CD8-positive, alpha-beta memory T cell (primary cell): ENCODE measurements at regions of chr19 and their contacts with region 1.

Region 1: DNA sequence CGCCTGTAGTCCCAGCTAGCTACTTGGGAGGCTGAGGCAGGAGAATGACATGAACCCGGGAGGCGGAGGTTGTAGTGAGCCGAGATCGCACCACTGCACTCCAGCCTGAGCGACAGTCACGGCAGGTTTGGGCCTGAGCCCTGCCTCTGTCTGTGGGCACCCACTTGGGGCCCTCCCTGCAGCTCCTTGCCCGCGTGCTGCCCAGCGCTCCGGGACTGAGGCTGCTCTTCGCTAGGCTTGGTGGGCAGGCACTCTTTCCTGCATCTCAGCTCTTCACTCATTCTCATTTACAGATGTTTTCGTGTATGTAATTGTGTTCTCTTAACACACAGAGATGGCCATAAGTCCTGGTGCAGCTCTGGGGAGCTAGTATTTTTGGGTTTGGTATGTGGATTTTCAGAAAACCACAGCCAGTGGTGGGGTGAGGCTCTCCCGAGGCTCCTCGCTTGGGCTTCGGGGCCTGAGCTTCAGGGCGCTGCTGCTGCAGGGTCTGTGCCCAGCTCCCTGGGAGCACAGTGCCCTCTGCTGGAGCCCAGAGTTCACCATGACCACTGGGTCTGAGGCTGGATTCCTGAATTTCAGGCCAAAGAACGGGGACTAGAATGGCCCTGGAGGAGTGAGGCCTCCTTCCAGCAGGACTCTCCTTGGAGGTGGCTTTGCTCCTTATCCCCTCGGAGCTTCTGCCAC is 15.2 kb downstream of the UPF1 start:
- DNase-seq: peak; percentile 47 to 75 (median 51)
- H3K4me3 ChIP-seq: no peak overlapping the region
- H3K4me3 Mint-ChIP-seq: peak overlapping the region in 4 of 7 donors; percentile 37 to 66 (median 52)
- H3K27ac ChIP-seq: no peak overlapping the region
- H3K27ac Mint-ChIP-seq: peak overlapping the region in 6 of 8 donors; percentile 7 to 91 (median 49)
- H3K4me1 ChIP-seq: peaks cover 48% of the 10 kb centered on the region
- H3K4me1 Mint-ChIP-seq: peaks cover 60 to 77% (median 77%) of the 10 kb centered on the region in 3 donors
- H3K27me3 ChIP-seq: no peaks in the 10 kb centered on the region
- H3K27me3 Mint-ChIP-seq: peaks cover 0 to 3% of the 10 kb centered on the region in 2 donors

Region 2: DNA sequence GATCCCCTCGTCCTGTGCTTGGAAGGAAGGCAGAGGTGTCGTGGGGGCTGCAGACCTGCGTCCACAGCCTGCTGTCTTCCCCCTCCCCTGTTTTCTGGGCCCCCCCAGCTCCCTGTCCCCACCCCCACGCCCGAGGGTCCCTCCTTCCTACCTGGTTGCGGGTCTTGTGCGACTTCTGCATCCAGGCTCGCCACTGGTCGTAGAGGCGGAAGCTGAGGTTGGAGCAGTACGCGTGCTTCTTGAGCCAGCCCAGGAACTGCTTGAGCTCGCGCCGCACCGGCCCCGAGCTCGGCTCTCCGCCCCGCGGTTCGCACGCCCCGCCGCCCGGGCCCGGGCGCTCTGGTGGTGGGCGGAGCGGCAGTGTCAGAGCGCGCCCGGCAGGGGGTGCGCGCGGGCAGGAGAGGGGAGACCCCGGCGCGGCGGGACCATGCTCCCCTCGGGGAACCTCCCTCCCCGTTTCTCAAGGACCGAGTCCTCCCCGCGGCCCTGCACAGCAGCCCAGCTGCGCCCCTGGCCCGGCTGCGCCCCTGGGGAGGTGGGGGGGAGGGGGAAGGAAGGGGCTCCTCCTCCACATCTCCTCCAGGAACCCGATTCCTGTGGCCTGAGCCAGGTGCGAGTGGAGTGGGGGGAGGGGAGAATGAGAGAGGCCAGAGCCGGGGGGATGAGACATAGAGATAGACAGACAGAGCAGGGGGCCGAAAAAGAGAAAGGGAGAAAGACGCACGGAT is 252.7 kb before region 1 on chr19:
- CTCF ChIA-PET with region 1: interaction called, 25 read pairs
- POLR2A ChIA-PET with region 1: interaction called, 3 read pairs
- DNase-seq: peak; percentile 66 to 81 (median 72)
- H3K4me3 ChIP-seq: peak overlapping the region; percentile 75
- H3K4me3 Mint-ChIP-seq: peak overlapping the region; percentile 68 to 79 (median 77)
- H3K27ac ChIP-seq: peak overlapping the region; percentile 38
- H3K27ac Mint-ChIP-seq: peak overlapping the region; percentile 56 to 89 (median 82)
- H3K4me1 ChIP-seq: peaks cover 28% of the 10 kb centered on the region
- H3K4me1 Mint-ChIP-seq: peaks cover 24 to 36% (median 29%) of the 10 kb centered on the region in 3 donors
- H3K27me3 ChIP-seq: peaks cover 4% of the 10 kb centered on the region
- H3K27me3 Mint-ChIP-seq: peaks cover under 1 to 3% of the 10 kb centered on the region in 2 donors

Region 3: DNA sequence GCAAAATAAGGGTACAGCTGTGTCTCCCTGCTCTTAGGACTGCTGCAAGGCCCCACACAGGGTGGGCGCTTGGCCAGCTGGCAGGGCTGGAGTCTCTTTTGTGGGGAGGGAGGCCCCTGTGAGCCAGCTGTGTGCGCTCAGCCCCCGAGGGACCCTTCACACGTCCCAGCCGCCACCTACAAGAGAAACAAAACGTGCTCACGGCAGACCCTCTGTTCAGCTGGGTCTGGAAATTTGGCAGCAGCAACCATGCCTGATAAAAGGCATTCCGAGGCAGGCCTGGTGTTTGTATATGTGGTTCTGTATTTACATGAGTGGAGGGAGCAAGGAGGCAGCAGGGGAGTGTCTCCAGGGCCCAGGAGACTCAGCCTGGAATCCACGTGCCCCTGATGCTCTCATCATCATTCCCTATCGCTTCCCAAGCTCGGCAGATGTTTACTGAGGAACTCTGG is 113.8 kb before region 1 on chr19:
- CTCF ChIA-PET with region 1: no interaction called
- POLR2A ChIA-PET with region 1: no interaction called
- DNase-seq: no peak
- H3K4me3 ChIP-seq: no peak overlapping the region
- H3K4me3 Mint-ChIP-seq: no peak overlapping the region
- H3K27ac ChIP-seq: no peak overlapping the region
- H3K27ac Mint-ChIP-seq: no peak overlapping the region
- H3K4me1 ChIP-seq: no peaks in the 10 kb centered on the region
- H3K4me1 Mint-ChIP-seq: peaks cover 0 to 5% (median 2%) of the 10 kb centered on the region in 3 donors
- H3K27me3 ChIP-seq: no peaks in the 10 kb centered on the region
- H3K27me3 Mint-ChIP-seq: no peaks in the 10 kb centered on the region

Region 4: GRCh38 chr19:18814063-18814462 is 32.9 kb before region 1 on chr19:
- CTCF ChIA-PET with region 1: no interaction called
- POLR2A ChIA-PET with region 1: no interaction called
- DNase-seq: no peak
- H3K4me3 ChIP-seq: no peak overlapping the region
- H3K4me3 Mint-ChIP-seq: no peak overlapping the region
- H3K27ac ChIP-seq: no peak overlapping the region
- H3K27ac Mint-ChIP-seq: no peak overlapping the region
- H3K4me1 ChIP-seq: no peaks in the 10 kb centered on the region
- H3K4me1 Mint-ChIP-seq: peaks cover 2 to 4% (median 4%) of the 10 kb centered on the region in 3 donors
- H3K27me3 ChIP-seq: no peaks in the 10 kb centered on the region
- H3K27me3 Mint-ChIP-seq: peaks cover 5 to 16% of the 10 kb centered on the region in 2 donors

Region 5: DNA sequence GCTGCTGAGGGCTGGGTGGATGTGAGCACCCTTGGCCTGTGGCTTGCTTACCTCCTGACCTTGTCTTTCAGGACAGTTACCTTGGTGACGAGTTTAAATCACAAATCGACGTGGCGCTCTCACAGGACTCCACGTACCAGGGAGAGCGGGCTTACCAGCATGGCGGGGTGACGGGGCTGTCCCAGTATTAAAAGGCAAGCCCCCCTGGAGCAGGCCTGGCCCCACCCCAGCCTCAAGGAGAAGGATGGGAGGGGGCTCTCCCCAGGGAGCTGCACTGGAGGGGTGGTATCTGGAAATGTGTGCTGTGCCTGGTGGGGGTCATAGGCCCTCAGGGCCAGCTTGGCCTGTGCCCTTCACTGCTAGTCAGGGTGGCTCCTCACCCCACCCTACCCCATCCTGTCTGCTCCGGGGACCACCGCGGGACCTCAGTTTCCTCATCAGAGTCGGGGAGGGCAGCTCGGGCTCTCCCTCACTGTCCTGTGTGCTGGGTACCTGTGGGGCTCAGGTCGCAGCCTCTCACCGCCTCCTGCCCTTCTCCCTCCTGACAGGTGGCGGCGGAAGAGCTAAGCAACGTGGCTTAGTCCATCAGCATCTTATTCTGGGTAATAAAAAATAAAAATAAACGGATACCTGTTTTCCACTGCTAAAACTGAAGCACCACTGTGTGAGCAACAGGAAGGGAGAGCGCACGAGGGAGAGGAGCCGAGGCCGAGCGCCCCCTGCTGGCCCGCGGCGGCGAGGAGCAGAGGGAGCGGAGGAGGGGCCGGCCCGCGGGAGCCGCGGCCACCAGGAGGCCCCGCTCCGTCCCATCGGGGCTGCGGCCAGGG is 19.2 kb after region 1 on chr19:
- CTCF ChIA-PET with region 1: interaction called, 10 read pairs
- POLR2A ChIA-PET with region 1: interaction called, 3 read pairs
- DNase-seq: peak; percentile 51 to 68 (median 59)
- H3K4me3 ChIP-seq: no peak overlapping the region
- H3K4me3 Mint-ChIP-seq: no peak overlapping the region
- H3K27ac ChIP-seq: no peak overlapping the region
- H3K27ac Mint-ChIP-seq: peak overlapping the region in 2 of 8 donors; percentile 20 to 44
- H3K4me1 ChIP-seq: no peaks in the 10 kb centered on the region
- H3K4me1 Mint-ChIP-seq: peaks cover 4 to 12% (median 8%) of the 10 kb centered on the region in 3 donors
- H3K27me3 ChIP-seq: no peaks in the 10 kb centered on the region
- H3K27me3 Mint-ChIP-seq: no peaks in the 10 kb centered on the region

Region 6: DNA sequence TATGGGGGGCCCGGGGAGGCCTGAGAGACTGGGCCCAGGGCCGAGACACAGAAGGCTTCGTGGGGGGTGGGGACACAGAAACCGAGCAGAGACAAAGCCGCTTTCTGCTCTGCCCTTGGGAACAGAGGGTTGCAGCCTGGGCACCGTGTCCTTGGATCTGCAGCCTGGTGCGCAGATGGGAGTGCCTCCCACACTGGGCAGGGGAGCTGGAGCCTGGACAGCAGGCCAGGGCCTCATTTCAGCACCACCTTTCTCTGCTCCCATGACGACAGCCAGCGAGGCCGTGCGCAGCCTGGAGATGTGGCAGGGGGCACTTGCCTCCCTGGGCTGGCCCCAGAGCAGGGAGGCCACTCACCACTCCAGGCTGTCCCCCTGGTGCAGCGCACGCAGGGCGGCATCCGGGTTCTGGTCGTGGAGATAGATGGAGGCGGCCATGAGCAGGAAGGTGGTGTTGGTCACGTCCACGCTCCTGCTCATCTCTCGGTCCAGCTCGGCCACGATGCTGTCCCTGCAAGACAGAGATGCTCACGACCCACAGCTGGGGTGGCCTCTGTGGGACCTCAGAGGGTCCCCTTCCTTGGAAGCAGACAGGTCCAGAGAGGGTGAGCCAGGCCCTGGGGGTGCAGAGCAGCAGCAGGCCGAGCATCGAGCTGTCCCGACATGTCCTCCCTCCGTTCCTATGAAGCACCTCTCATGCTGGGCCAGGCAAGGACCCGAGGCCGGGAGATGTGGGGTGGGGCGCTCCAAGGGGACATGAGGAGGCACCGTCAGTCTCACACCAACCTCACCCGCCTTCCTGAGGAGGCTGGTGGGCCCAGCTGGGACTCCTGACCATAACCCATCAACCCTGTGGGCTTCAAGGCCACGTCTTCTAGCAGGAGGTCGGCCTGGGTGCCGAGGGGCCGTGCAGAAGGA is 59.9 kb after region 1 on chr19:
- CTCF ChIA-PET with region 1: no interaction called
- POLR2A ChIA-PET with region 1: no interaction called
- DNase-seq: no peak
- H3K4me3 ChIP-seq: no peak overlapping the region
- H3K4me3 Mint-ChIP-seq: no peak overlapping the region
- H3K27ac ChIP-seq: no peak overlapping the region
- H3K27ac Mint-ChIP-seq: no peak overlapping the region
- H3K4me1 ChIP-seq: no peaks in the 10 kb centered on the region
- H3K4me1 Mint-ChIP-seq: peaks cover 0 to 2% (median 0%) of the 10 kb centered on the region in 3 donors
- H3K27me3 ChIP-seq: no peaks in the 10 kb centered on the region
- H3K27me3 Mint-ChIP-seq: no peaks in the 10 kb centered on the region